Natural killer cell (primary cell): ENCODE measurements at regions of chr3 and their contacts with region 1.

Region 1: GRCh38 chr3:52536369-52537164 is at the start of gene UQCC5:
- DNase-seq: peak; percentile 95 to 99
- ATAC-seq: peak; percentile 88 to 96 (median 91)
- H3K4me3 ChIP-seq: peak within 1 kb of the TSS; percentile 94
- H3K4me3 Mint-ChIP-seq: peak within 1 kb of the TSS; percentile 98
- H3K27ac ChIP-seq: peak within 1 kb of the TSS; percentile 83
- H3K27ac Mint-ChIP-seq: peak within 1 kb of the TSS; percentile 95 to 96
- H3K4me1 ChIP-seq: peaks cover 49% of the 10 kb centered on the region
- H3K4me1 Mint-ChIP-seq: peaks cover 42 to 52% of the 10 kb centered on the region in 2 donors
- H3K27me3 ChIP-seq: no peaks in the 10 kb centered on the region
- H3K27me3 Mint-ChIP-seq: no peaks in the 10 kb centered on the region
- CTCF ChIP-seq: no peak
- total RNA-seq, gene UQCC5: 4.1 to 9.5 (median 7.3) TPM

Region 2: DNA sequence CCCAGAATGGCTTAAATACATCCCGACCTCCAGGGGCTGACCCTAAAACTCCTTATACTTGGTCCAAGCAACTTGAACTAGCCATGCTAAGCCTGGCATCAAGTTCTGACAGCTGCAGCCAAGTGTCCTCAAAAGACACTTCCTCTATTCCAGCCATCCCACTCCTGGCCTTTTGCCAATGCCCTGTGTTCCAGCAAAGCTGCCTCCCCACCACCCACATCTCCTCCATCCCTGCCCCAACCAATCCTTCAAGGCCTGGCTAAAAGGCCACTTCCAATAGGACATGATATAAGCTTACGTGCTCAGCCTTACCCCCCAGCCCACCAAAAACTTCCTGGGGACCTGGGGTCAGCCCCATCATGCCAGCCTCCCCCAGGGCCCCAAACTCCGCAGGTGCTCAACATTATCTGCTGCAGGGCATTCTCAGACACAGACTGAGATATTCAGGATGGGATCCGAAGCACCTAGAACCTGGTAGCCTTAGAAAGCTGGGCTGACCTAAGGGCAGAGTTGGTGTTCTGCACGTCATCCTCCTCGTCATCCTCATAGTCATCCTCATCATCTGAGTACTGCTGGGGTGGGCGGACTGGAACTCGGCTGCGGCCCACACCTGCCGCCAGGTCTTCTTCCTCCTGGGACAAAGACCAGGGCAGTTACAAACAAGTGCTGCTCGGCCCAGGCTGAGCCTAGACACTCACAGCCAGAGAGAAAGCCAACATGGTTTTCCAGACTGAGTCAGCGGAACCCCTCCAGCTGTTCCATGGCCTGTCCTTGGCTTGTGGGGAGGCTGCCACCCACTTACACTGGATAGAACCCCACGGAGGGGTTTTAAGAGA is 132.4 kb before region 1 on chr3:
- intact Hi-C with region 1: no loop called
- DNase-seq: no peak
- ATAC-seq: no peak
- H3K4me3 ChIP-seq: no peak overlapping the region
- H3K4me3 Mint-ChIP-seq: no peak overlapping the region
- H3K27ac ChIP-seq: no peak overlapping the region
- H3K27ac Mint-ChIP-seq: no peak overlapping the region
- H3K4me1 ChIP-seq: peaks cover 17% of the 10 kb centered on the region
- H3K4me1 Mint-ChIP-seq: peaks cover 14 to 24% of the 10 kb centered on the region in 2 donors
- H3K27me3 ChIP-seq: no peaks in the 10 kb centered on the region
- H3K27me3 Mint-ChIP-seq: no peaks in the 10 kb centered on the region
- CTCF ChIP-seq: no peak

Region 3: GRCh38 chr3:52455283-52456168 is 81.0 kb before region 1 on chr3 and contains the start of gene NISCH:
- intact Hi-C with region 1: loop called (anchors 5 kb)
- DNase-seq: peak; percentile 97
- ATAC-seq: peak; percentile 81 to 93 (median 87)
- H3K4me3 ChIP-seq: peak within 1 kb of the TSS; percentile 93
- H3K4me3 Mint-ChIP-seq: peak within 1 kb of the TSS; percentile 96
- H3K27ac ChIP-seq: peak within 1 kb of the TSS; percentile 90
- H3K27ac Mint-ChIP-seq: peak within 1 kb of the TSS; percentile 95 to 96
- H3K4me1 ChIP-seq: peaks cover 52% of the 10 kb centered on the region
- H3K4me1 Mint-ChIP-seq: peaks cover 46 to 50% of the 10 kb centered on the region in 2 donors
- H3K27me3 ChIP-seq: no peaks in the 10 kb centered on the region
- H3K27me3 Mint-ChIP-seq: no peaks in the 10 kb centered on the region
- CTCF ChIP-seq: no peak
- total RNA-seq, gene NISCH: 162 to 191 (median 175) TPM

Region 4: DNA sequence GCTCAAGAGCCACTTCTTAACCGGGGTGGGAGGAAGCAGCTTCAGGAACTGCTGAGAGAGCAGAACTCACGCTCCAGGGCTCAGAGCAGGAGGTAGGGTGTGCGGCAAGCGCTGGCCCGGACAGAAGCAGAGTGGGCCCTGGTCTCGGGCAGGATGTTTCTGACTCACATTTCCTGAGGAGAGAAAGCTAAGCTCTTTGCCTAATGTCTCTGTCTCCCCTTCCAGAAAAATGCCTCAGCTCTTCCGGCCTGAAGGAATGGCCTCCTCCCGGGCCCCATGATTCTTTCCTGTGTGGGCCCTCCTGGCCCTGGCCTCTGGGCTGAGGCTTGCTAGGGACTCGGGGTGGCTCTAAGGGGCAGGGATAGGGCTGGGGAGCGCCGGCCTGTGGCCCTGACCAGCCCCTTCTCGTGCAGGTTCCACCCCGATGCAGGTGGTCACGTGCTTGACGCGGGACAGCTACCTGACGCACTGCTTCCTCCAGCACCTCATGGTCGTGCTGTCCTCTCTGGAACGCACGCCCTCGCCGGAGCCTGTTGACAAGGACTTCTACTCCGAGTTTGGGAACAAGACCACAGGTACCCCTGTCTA is 45.5 kb before region 1 on chr3:
- intact Hi-C with region 1: no loop called
- DNase-seq: no peak
- ATAC-seq: no peak
- H3K4me3 ChIP-seq: no peak overlapping the region
- H3K4me3 Mint-ChIP-seq: no peak overlapping the region
- H3K27ac ChIP-seq: no peak overlapping the region
- H3K27ac Mint-ChIP-seq: no peak overlapping the region
- H3K4me1 ChIP-seq: peaks cover 29% of the 10 kb centered on the region
- H3K4me1 Mint-ChIP-seq: peaks cover 0 to 9% of the 10 kb centered on the region in 2 donors
- H3K27me3 ChIP-seq: no peaks in the 10 kb centered on the region
- H3K27me3 Mint-ChIP-seq: no peaks in the 10 kb centered on the region
- CTCF ChIP-seq: no peak

Region 5: GRCh38 chr3:52593103-52593502 is 56.5 kb after region 1 on chr3:
- intact Hi-C with region 1: no loop called
- DNase-seq: no peak
- ATAC-seq: no peak
- H3K4me3 ChIP-seq: no peak overlapping the region
- H3K4me3 Mint-ChIP-seq: no peak overlapping the region
- H3K27ac ChIP-seq: no peak overlapping the region
- H3K27ac Mint-ChIP-seq: no peak overlapping the region
- H3K4me1 ChIP-seq: no peaks in the 10 kb centered on the region
- H3K4me1 Mint-ChIP-seq: no peaks in the 10 kb centered on the region
- H3K27me3 ChIP-seq: no peaks in the 10 kb centered on the region
- H3K27me3 Mint-ChIP-seq: no peaks in the 10 kb centered on the region
- CTCF ChIP-seq: no peak

Region 6: GRCh38 chr3:52705688-52706686 is 169.4 kb after region 1 on chr3 and contains the starts of genes GLT8D1 and SPCS1:
- intact Hi-C with region 1: no loop called
- DNase-seq: peak; percentile 90 to 93
- ATAC-seq: peak; percentile 90 to 96 (median 91)
- H3K4me3 ChIP-seq: peak within 1 kb of the TSS; percentile 66
- H3K4me3 Mint-ChIP-seq: peak within 1 kb of the TSS; percentile 92
- H3K27ac ChIP-seq: peak within 1 kb of the TSS; percentile 83
- H3K27ac Mint-ChIP-seq: peak within 1 kb of the TSS; percentile 94 to 95
- H3K4me1 ChIP-seq: peaks cover 29% of the 10 kb centered on the region
- H3K4me1 Mint-ChIP-seq: peaks cover 14 to 18% of the 10 kb centered on the region in 2 donors
- H3K27me3 ChIP-seq: no peaks in the 10 kb centered on the region
- H3K27me3 Mint-ChIP-seq: no peaks in the 10 kb centered on the region
- CTCF ChIP-seq: no peak
- total RNA-seq, gene GLT8D1: 31.1 to 39.4 (median 38.2) TPM
- total RNA-seq, gene SPCS1: 52.4 to 64.4 (median 57.3) TPM